ENCODE measurements at regions of chr7 and their contacts with region 1.

Region 1: DNA sequence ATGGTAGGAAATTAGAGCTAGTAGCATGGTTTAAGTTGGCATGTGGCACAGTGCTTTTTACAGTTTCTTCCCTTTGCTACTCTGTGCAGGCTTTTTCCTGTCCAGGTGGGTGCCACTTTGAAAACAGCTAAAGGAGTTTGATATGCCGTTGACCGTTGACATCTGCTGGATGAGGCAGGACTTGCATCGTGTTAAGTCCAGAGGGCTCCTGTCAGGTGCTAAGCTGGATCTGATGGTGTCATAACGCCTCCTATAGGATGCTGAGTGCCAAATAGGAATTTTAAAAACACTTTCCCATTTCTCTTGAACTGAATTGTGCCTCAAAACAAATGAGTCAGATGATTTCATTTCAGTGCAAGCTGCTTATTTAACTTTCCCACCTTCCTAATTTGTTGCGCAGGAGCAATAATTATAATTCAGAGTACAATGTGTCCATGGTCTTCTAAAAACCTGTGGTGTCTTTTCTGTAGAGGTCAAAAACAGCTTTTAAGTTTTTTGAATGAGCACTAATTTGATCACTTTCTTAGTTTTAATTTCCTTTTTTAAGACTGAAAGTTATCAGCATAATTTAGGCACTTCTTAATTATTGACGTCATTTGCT is 178.3 kb downstream of the CDCA7L start:
- DNase-seq: peak; percentile 78

Region 2: GRCh38 chr7:21253740-21254687 is 513.4 kb before region 1 on chr7:
- CTCF ChIA-PET with region 1: interaction called, 42 read pairs
- POLR2A ChIA-PET with region 1: no interaction called
- DNase-seq: peak; percentile 76

Region 3: DNA sequence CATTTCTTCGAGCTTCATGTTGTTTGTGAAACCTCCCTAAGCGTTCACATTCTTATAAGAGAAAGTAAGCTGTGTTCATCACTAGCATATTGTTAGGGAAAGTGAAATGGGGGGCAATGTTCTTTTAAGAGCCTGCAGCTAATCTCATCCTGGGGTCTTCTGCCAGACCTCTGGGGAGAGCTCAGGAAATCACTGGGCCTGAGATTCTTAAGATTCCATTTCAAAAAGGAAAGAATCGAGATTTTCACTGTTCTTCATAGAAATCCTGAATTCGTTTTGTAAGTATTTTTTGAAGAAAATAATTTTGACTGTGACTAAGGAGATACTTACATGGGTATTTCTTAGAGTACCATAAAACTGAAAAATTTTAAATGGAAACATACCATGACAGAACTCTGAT is 17.6 kb after region 1 on chr7:
- CTCF ChIA-PET with region 1: no interaction called
- POLR2A ChIA-PET with region 1: no interaction called
- DNase-seq: no peak

Region 4: GRCh38 chr7:21828846-21829245 is 61.4 kb after region 1 on chr7:
- CTCF ChIA-PET with region 1: no interaction called
- POLR2A ChIA-PET with region 1: no interaction called
- DNase-seq: peak; percentile 26

Region 5: DNA sequence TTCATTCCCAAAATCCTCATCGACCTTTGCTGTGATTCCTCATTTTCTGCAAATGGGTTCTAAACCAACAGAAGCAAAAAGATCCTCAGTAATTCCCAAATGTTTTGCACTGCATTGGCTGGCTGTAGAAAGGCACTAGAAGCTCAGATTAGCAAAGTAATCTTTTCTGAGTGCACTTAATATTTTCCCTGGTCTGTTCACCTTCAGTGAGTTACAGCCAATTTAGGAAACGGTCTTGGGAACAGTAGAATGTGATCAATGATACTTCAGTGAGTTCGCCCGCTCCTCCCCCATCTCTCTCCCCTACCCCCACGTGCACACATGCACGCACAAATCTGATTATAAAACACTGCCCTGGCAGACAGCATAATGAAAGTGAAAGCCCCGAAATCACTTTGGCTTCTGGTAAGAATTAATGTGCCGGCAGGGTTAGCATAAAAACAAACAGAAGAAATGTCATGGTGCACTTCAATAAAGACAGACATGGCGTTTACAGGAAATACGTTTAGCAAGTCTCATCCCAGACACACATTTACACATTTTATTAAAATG is 379.6 kb after region 1 on chr7:
- CTCF ChIA-PET with region 1: no interaction called
- POLR2A ChIA-PET with region 1: no interaction called
- DNase-seq: no peak

Measured in HEK293T (cell line).